ENCODE measurements at regions of chr13 and their contacts with region 1.

Region 1: GRCh38 chr13:97221989-97222700 is at the start of gene MBNL2:
- DNase-seq: peak; percentile 91 to 93 (median 92)
- ATAC-seq: peak; percentile 93 to 98 (median 95)
- H3K4me3 ChIP-seq: peak within 1 kb of the TSS; percentile 47 to 81 (median 73)
- H3K27ac ChIP-seq: peak within 1 kb of the TSS; percentile 71 to 96 (median 90)
- H3K4me1 ChIP-seq: peaks cover 7 to 38% (median 29%) of the 10 kb centered on the region in 12 donors
- H3K27me3 ChIP-seq: no peaks in the 10 kb centered on the region
- CTCF ChIP-seq: no peak
- POLR2A ChIP-seq: peak in 1 of 2 donors; percentile 92
- total RNA-seq, gene MBNL2: 59.4 to 100 (median 83.1) TPM

Region 2: GRCh38 chr13:97242755-97243497 is 20.8 kb after region 1 on chr13:
- intact Hi-C with region 1: loop called in 1 of 10 experiments (anchors 2 kb)
- DNase-seq: peak in 2 of 5 donors; percentile 39 to 42
- ATAC-seq: peak in 3 of 4 donors; percentile 19 to 57 (median 40)
- H3K4me3 ChIP-seq: no peak overlapping the region
- H3K27ac ChIP-seq: peak overlapping the region; percentile 37 to 84 (median 74)
- H3K4me1 ChIP-seq: peaks cover 12 to 100% (median 90%) of the 10 kb centered on the region in 12 donors
- H3K27me3 ChIP-seq: no peaks in the 10 kb centered on the region
- CTCF ChIP-seq: no peak
- POLR2A ChIP-seq: no peak

Region 3: DNA sequence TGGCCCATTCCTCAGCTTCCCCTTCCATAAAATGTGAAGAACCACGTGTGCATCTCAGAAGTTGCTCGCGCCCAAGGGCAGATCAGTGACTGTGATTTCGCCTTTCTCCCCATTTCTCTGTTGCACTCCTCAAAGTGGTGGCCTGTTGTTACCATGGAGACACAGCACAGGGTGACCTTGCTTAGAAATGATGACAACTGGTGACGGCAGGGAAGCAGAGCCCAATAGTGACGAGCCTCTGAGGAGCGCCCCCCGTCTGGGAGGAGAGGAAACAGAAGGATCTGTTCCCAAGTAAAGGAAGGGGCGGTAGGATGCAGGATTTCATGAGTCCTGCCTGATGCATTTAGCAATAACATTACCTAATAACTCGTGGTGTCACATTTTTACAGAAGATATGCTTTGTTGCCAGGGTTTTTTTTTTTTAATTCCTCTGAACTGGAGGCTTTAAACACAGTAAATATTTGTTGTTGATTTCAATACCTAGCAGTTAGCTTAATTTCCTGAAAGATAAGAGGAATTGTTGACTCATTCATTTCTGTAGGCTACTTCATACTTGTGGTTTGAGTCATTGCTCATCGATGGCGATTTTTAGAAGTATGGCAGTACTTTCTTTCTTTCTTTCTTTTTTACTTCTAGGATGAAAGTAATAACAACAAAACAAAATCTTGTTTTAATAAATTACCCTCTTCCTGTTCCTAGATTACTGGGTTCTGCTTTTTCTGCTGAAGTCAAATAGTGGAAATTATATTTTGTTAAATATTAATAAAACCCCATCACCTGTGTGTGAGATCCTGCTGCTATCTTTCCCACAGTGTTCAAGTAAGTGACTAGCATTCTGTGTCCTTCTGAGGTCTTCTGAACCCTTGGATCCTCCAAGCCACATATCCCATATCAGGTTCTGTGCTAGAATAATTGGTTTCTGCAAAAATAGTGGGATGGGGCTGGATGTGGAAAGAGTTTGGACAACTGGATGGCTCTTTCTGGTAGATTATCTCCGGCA is 36.0 kb after region 1 on chr13:
- intact Hi-C with region 1: loop called in 2 of 10 experiments (anchors 5 kb)
- DNase-seq: peak in 4 of 5 donors; percentile 56 to 80 (median 61)
- ATAC-seq: peak; percentile 44 to 73 (median 61)
- H3K4me3 ChIP-seq: no peak overlapping the region
- H3K27ac ChIP-seq: peak overlapping the region in 10 of 12 donors; percentile 39 to 89 (median 72)
- H3K4me1 ChIP-seq: peaks cover 19 to 98% (median 83%) of the 10 kb centered on the region in 12 donors
- H3K27me3 ChIP-seq: no peaks in the 10 kb centered on the region
- CTCF ChIP-seq: peak in 5 of 12 donors; percentile 13 to 32 (median 19)
- POLR2A ChIP-seq: no peak

Region 4: DNA sequence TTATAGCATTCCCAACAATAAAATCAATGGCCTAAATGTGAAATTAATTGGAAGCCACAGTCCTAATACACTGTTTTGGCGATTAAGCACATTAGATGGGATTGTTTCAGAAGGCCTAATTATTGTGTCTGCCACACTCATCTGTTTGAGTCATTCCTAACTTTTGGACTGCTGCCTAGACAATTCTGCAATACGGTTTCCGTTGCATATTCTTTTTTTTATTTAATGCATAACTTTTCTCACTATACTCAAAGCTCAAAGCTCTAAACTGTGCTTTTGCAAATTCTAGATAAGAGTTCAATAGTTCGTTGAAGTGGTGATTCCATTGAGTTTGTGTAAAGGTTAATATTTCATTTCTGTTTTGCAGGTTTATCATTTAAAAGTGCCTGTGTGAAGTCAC is 53.1 kb after region 1 on chr13:
- intact Hi-C with region 1: loop called in 2 of 10 experiments (anchors 10 kb)
- DNase-seq: peak in 1 of 5 donors; percentile 33
- ATAC-seq: peak in 3 of 4 donors; percentile 40 to 75 (median 55)
- H3K4me3 ChIP-seq: no peak overlapping the region
- H3K27ac ChIP-seq: peak overlapping the region in 10 of 12 donors; percentile 14 to 75 (median 52)
- H3K4me1 ChIP-seq: peaks cover 6 to 86% (median 76%) of the 10 kb centered on the region in 12 donors
- H3K27me3 ChIP-seq: no peaks in the 10 kb centered on the region
- CTCF ChIP-seq: no peak
- POLR2A ChIP-seq: no peak

Region 5: DNA sequence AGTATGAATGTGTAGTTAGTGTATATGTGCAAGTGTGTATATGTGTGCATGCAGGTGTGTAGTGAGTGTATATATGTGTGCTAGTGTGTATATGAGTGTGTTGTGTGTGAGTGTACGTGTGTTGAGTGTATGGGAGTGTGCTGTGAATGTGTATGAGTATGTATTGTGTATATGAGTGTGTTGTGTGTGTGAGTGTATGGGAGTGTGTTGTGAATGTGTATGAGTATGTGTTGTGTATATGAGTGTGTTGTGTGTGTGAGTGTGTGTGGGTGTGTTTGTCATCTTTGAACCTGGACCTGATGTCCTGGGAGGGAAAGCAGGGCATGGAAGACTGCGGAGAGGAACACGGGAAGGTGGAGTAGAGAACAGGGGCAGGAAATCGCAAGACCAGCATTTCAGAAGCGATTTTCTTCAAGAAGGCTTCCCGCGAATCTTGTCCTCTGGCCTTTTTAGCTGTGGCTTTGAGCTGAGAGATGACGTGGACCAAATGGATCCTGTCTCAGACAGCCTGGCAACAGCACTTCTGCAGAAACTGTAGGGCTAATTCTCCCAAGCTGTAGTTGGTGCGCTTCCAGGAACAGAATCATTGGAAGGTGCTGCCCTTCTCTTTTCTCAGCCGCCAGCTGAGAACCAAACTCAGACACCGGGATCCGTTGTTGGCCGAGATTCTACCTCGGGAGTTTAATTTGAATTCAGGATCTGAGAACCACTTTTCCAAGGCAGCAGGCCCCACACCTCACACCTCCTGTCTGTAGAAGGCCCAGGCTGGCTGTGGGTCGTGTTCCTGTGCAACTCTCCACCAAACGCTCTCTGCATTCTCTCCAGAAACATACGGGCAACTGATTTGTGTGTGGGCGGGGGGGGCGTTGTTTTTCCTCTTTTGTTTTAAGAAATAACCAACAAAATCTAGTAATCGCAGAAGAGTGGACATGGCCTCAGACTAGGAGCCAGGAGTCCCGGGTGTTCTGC is 117.2 kb after region 1 on chr13:
- intact Hi-C with region 1: loop called in 9 of 10 experiments (anchors 2 to 5 kb)
- DNase-seq: peak in 4 of 5 donors; percentile 46 to 79 (median 74)
- ATAC-seq: peak; percentile 68 to 91 (median 87)
- H3K4me3 ChIP-seq: no peak overlapping the region
- H3K27ac ChIP-seq: peak overlapping the region in 11 of 12 donors; percentile 35 to 80 (median 69)
- H3K4me1 ChIP-seq: peaks cover 7 to 73% (median 39%) of the 10 kb centered on the region in 12 donors
- H3K27me3 ChIP-seq: no peaks in the 10 kb centered on the region
- CTCF ChIP-seq: peak in 1 of 12 donors; percentile 6
- POLR2A ChIP-seq: no peak

Region 6: GRCh38 chr13:97344265-97345175 is 122.4 kb after region 1 on chr13:
- intact Hi-C with region 1: loop called (anchors 2 to 5 kb)
- DNase-seq: peak in 4 of 5 donors; percentile 51 to 71 (median 58)
- ATAC-seq: peak; percentile 63 to 83 (median 81)
- H3K4me3 ChIP-seq: no peak overlapping the region
- H3K27ac ChIP-seq: peak overlapping the region in 6 of 12 donors; percentile 2 to 50 (median 17)
- H3K4me1 ChIP-seq: peaks cover 6 to 52% (median 21%) of the 10 kb centered on the region in 12 donors
- H3K27me3 ChIP-seq: no peaks in the 10 kb centered on the region
- CTCF ChIP-seq: peak; percentile 58 to 82 (median 74)
- POLR2A ChIP-seq: no peak

Measured in heart left ventricle (tissue), 16 donors.